Caco-2 (cell line): ENCODE measurements at regions of chr17 and their contacts with region 1.

Region 1: DNA sequence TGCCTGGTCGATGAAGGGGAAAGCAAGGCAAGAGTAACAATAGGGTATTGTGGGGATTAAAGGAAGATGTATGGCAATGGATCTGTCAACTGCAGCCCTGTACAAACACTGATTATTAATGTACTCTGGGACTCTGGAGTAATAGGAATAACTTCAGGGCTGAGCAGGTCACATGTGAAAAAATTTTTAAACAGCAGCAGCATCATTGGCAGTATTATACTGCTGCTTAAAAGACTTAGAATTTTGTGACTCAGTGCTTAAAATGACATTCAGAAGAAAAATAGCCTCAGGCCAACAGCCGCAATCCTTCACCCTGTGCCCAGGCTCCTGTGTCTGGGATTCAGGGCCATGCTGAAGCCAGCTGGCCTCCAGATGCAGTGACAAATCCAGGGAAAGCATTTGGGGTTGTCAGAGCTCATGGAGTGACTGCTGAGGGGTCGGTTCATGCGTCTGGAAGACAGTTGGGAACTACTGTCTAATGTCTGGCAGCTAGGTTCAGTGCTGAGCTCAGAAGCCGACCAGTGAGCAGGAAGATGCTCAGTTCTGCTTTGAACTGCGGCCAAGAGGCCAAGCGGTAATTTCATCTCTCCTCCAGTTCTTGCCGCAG is 22.2 kb downstream of the TEX2 start:
- DNase-seq: no peak
- H3K4me3 ChIP-seq: no peak overlapping the region
- H3K4me3 Mint-ChIP-seq: no peak overlapping the region
- H3K27ac Mint-ChIP-seq: no peak overlapping the region
- H3K4me1 ChIP-seq: peaks cover 31% of the 10 kb centered on the region
- H3K4me1 Mint-ChIP-seq: peaks cover 41% of the 10 kb centered on the region
- H3K27me3 ChIP-seq: no peaks in the 10 kb centered on the region
- H3K27me3 Mint-ChIP-seq: no peaks in the 10 kb centered on the region
- CTCF ChIP-seq: no peak

Region 2: DNA sequence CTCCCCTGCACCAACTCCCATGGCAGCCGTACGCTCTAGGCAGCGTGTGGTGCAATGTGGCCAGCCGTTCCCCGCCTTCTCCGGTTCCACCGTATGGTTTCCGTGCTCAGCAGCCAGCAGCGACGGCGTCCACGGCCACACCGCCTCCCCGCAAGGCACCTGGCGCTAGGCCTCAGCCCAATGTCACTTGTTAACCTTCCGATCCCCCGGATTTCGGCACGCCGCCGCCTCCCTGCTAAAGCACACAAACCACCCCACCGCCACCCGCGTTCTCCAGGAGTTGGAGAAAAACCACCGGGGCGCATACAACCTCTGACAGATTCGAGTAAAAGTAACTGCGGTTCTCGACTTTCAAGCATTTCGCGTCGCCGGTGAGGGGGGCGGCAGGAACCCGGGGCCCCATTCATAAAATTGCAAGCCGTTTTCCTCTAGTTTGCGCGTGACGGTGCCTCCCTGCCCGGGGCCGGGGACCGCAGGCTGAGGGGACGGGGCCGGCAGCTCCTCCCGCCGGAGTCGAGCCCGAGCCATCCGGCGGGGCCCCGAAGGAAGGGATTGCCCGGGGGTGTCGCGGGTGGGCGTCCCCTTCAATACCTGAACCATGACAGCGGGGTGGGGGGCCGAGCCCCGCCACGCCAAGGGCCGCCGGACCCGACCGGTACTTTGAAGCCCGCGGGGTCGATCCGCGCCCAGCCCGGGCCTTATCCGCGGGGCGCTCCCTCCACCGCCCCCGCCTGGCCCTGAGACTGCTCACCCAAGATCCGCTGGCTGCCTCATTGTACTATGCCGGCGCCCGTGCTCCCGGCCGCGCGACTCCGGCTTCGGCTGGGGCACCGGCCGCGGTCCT is 21.8 kb after region 1 on chr17 and contains the start of gene TEX2:
- CTCF ChIA-PET with region 1: interaction called, 4 read pairs
- POLR2A ChIA-PET with region 1: no interaction called
- intact Hi-C with region 1: loop called (anchors 2 kb)
- DNase-seq: peak; percentile 54 to 66
- H3K4me3 ChIP-seq: peak within 1 kb of the TSS; percentile 83
- H3K4me3 Mint-ChIP-seq: peak within 1 kb of the TSS; percentile 98
- H3K27ac Mint-ChIP-seq: peak within 1 kb of the TSS; percentile 53
- H3K4me1 ChIP-seq: peaks cover 15% of the 10 kb centered on the region
- H3K4me1 Mint-ChIP-seq: peaks cover 12% of the 10 kb centered on the region
- H3K27me3 ChIP-seq: no peaks in the 10 kb centered on the region
- H3K27me3 Mint-ChIP-seq: peaks cover 4% of the 10 kb centered on the region
- CTCF ChIP-seq: no peak
- total RNA-seq, gene TEX2: 19.3 and 20.2 TPM in 2 replicates